ENCODE measurements at regions of chr9 and their contacts with region 1.

Region 1: DNA sequence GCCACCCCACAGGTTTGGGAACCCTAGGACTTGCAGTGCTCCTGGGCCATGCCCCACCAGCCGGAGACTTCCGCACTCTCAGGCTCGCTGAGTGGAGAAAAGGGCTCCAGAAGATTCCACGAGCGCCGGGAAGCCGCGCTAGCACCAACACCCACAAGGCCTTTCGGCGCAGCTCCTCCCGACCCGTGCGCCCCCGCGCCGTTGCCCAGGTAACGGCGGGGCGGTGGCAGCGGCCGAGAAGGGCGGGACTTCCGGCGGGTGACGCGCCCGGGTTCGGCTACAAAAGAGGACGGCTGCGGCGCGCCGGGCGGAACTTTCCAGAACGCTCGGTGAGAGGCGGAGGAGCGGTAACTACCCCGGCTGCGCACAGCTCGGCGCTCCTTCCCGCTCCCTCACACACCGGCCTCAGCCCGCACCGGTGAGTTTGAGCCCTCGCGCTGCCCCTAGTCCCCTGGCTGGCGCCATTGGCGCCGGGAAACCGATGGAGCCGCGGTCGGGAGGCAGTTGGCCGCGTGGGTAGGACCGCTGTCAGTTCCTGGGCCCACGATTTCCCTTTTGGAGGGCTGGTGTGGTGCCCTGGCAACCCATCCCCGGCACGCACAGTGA is at the start of gene DNAJA1:
- DNase-seq: peak; percentile 92 to 98 (median 97)
- H3K4me3 ChIP-seq: peak within 1 kb of the TSS; percentile 96 to 100
- H3K4me3 Mint-ChIP-seq: peak within 1 kb of the TSS; percentile 92 to 99 (median 96)
- H3K27ac ChIP-seq: peak within 1 kb of the TSS; percentile 100
- H3K27ac Mint-ChIP-seq: peak within 1 kb of the TSS; percentile 94 to 98 (median 97)
- H3K4me1 ChIP-seq: peaks cover 63% of the 10 kb centered on the region
- H3K4me1 Mint-ChIP-seq: peaks cover 41 to 82% (median 66%) of the 10 kb centered on the region in 4 donors
- H3K27me3 ChIP-seq: no peaks in the 10 kb centered on the region
- H3K27me3 Mint-ChIP-seq: no peaks in the 10 kb centered on the region
- total RNA-seq, gene DNAJA1: 79.8 to 84.4 TPM

Region 2: GRCh38 chr9:32550562-32551433 is 474.3 kb before region 1 on chr9:
- CTCF ChIA-PET with region 1: no interaction called
- POLR2A ChIA-PET with region 1: interaction called, 10 read pairs
- intact Hi-C with region 1: loop called (anchors 1 kb)
- DNase-seq: peak; percentile 95 to 99 (median 95)
- H3K4me3 ChIP-seq: peak overlapping the region; percentile 93 to 98
- H3K4me3 Mint-ChIP-seq: peak overlapping the region; percentile 92 to 99 (median 97)
- H3K27ac ChIP-seq: peak overlapping the region; percentile 88
- H3K27ac Mint-ChIP-seq: peak overlapping the region; percentile 92 to 100 (median 98)
- H3K4me1 ChIP-seq: peaks cover 47% of the 10 kb centered on the region
- H3K4me1 Mint-ChIP-seq: peaks cover 28 to 66% (median 49%) of the 10 kb centered on the region in 4 donors
- H3K27me3 ChIP-seq: no peaks in the 10 kb centered on the region
- H3K27me3 Mint-ChIP-seq: no peaks in the 10 kb centered on the region

Region 3: DNA sequence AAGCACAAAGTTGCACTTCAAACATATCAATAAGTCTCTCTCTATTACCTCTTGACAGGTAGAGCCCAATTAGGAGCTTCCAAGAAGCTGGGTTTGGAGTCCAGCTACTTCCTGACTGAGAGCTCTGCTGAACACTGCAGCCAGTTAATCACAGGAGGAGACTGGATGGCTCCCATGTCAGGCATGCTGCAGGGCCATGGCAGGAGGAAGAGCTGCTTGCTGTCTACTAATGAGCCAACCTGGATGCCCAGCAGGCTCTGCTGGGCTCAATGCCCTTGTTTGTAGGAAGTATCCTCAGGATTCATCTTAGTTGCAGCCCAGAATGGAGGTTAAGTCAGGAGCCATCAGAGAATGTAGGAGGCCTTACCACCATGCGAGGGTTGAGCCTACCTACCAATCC is 149.8 kb before region 1 on chr9:
- CTCF ChIA-PET with region 1: no interaction called
- POLR2A ChIA-PET with region 1: no interaction called
- intact Hi-C with region 1: no loop called
- DNase-seq: no peak
- H3K4me3 ChIP-seq: no peak overlapping the region
- H3K4me3 Mint-ChIP-seq: no peak overlapping the region
- H3K27ac ChIP-seq: no peak overlapping the region
- H3K27ac Mint-ChIP-seq: no peak overlapping the region
- H3K4me1 ChIP-seq: no peaks in the 10 kb centered on the region
- H3K4me1 Mint-ChIP-seq: no peaks in the 10 kb centered on the region
- H3K27me3 ChIP-seq: no peaks in the 10 kb centered on the region
- H3K27me3 Mint-ChIP-seq: peaks cover 0 to 8% of the 10 kb centered on the region in 2 donors

Region 4: GRCh38 chr9:32954642-32955041 is 70.4 kb before region 1 on chr9:
- CTCF ChIA-PET with region 1: no interaction called
- POLR2A ChIA-PET with region 1: no interaction called
- intact Hi-C with region 1: no loop called
- DNase-seq: no peak
- H3K4me3 ChIP-seq: no peak overlapping the region
- H3K4me3 Mint-ChIP-seq: no peak overlapping the region
- H3K27ac ChIP-seq: no peak overlapping the region
- H3K27ac Mint-ChIP-seq: no peak overlapping the region
- H3K4me1 ChIP-seq: no peaks in the 10 kb centered on the region
- H3K4me1 Mint-ChIP-seq: no peaks in the 10 kb centered on the region
- H3K27me3 ChIP-seq: no peaks in the 10 kb centered on the region
- H3K27me3 Mint-ChIP-seq: no peaks in the 10 kb centered on the region

Region 5: DNA sequence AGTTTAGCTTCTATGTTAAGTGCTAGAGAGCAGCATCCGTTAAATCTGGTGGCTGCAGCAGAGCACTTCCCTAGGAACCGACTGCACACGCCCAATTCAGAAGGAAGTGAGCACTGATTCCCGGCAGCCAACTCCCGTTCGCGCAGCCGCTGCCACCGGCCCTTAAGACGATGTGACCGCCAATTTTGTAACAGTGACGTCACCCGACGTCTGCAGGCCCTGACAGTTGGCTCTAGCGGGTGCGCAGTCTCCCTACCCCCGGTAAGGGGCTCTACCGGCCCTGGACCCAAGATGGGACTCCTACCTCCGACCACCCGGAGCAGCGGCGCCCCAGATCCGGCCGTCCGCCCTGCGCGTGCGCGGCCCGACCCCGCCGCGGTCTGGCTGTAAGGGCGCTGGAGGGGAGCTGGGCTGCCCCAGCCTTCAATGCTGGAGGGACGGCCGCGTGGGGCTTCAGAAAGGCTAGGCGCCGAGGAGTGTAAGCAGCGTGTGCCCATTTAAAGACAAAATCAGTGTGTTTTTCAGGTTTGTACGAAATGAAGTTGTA is 19.1 kb after region 1 on chr9:
- CTCF ChIA-PET with region 1: interaction called, 3 read pairs
- POLR2A ChIA-PET with region 1: interaction called, 47 read pairs
- intact Hi-C with region 1: loop called (anchors 1 kb)
- DNase-seq: peak; percentile 58 to 83 (median 60)
- H3K4me3 ChIP-seq: peak overlapping the region; percentile 37 to 58
- H3K4me3 Mint-ChIP-seq: peak overlapping the region; percentile 75 to 89 (median 84)
- H3K27ac ChIP-seq: peak overlapping the region; percentile 58
- H3K27ac Mint-ChIP-seq: peak overlapping the region; percentile 54 to 92 (median 85)
- H3K4me1 ChIP-seq: peaks cover 8% of the 10 kb centered on the region
- H3K4me1 Mint-ChIP-seq: peaks cover 10 to 19% (median 13%) of the 10 kb centered on the region in 4 donors
- H3K27me3 ChIP-seq: no peaks in the 10 kb centered on the region
- H3K27me3 Mint-ChIP-seq: no peaks in the 10 kb centered on the region

Region 6: DNA sequence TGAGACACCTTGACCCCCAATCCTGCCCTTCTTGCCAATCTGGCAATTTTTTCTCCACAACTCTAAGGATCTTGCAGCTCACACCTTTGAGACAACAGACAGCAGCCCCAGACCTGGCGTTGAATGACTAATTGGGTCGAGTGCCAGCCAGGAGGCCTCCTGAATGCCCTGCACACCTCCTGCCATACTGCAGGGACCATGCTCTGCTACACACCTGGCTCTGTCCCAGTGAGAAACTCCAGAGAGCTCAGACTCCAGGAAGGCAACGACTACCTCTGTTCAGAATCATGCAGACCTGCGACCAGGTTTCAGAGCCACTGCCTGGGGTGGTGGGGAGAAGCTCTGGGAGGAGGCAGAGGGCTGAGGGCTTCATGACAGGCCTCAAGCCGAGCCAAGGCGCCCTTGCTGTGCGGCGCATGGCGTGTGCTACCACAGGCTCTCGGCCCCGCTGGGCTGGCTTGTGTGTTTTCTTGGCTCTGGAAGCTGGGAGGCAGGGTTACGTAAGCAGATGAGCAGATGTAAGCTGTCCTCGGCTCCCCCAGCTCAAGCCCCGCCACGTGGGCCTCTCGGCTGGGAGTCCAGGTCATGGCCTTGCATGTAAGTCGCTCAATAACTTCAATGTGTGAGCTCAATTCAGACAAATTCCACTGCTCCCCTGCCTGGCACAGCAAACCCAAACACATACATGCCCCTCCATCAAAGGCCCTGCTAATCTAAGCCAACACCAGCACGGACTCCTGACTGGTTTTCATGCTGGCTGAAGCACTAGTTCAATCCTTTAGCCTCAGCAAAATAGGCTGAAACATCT is 114.6 kb after region 1 on chr9:
- CTCF ChIA-PET with region 1: no interaction called
- POLR2A ChIA-PET with region 1: interaction called, 10 read pairs
- intact Hi-C with region 1: no loop called
- DNase-seq: no peak
- H3K4me3 ChIP-seq: no peak overlapping the region
- H3K4me3 Mint-ChIP-seq: peak overlapping the region in 7 of 8 donors; percentile 36 to 88 (median 75)
- H3K27ac ChIP-seq: no peak overlapping the region
- H3K27ac Mint-ChIP-seq: peak overlapping the region; percentile 37 to 96 (median 89)
- H3K4me1 ChIP-seq: peaks cover 95% of the 10 kb centered on the region
- H3K4me1 Mint-ChIP-seq: peaks cover 70 to 98% (median 86%) of the 10 kb centered on the region in 4 donors
- H3K27me3 ChIP-seq: no peaks in the 10 kb centered on the region
- H3K27me3 Mint-ChIP-seq: no peaks in the 10 kb centered on the region

Region 7: DNA sequence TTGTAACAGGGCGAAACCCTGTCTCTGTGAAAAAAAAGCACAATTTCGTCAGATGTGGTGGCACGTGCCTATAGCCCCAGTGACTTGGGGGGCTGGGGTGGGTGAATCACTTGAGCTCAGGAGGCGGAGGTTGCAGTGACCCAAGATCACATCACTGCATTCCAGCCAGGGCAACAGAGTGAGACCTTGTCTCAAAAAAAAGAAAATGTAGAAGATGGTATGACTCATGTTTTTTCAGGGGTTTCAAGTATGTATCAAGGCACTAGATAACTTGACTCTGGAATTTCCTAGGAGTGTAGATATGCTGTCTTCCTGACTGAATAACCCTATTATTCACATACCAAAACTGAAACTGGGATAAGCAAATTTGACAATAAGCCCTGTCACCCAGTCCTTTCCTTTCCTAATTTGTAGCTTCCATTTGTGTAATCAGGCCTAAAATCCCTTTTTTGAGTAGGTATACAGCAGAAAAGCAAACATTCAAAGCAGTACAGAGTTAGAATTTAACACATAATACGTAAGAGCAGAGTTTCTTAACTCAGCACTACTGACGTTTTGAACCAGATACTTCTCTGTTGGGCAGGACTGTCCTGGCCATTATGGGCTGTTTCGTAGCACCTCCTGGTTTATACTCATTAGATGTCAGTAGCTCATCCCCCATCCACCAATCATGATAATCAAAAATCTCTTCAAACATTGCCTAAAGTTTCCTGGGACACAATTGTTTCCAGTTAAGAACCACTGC is 481.7 kb after region 1 on chr9:
- CTCF ChIA-PET with region 1: no interaction called
- POLR2A ChIA-PET with region 1: no interaction called
- intact Hi-C with region 1: no loop called
- DNase-seq: no peak
- H3K4me3 ChIP-seq: no peak overlapping the region
- H3K4me3 Mint-ChIP-seq: no peak overlapping the region
- H3K27ac ChIP-seq: no peak overlapping the region
- H3K27ac Mint-ChIP-seq: no peak overlapping the region
- H3K4me1 ChIP-seq: no peaks in the 10 kb centered on the region
- H3K4me1 Mint-ChIP-seq: peaks cover 2 to 4% (median 3%) of the 10 kb centered on the region in 4 donors
- H3K27me3 ChIP-seq: no peaks in the 10 kb centered on the region
- H3K27me3 Mint-ChIP-seq: peaks cover 0 to 2% of the 10 kb centered on the region in 2 donors

Measured in CD4-positive, alpha-beta memory T cell (primary cell).